Posterior vena cava (tissue), 2 donors: ENCODE measurements at regions of chr16 and their contacts with region 1.

Region 1: GRCh38 chr16:2703241-2703745 is 16.7 kb downstream of the PRSS27 start:
- DNase-seq: no peak

Region 2: GRCh38 chr16:2663553-2664546 is 39.4 kb before region 1 on chr16:
- intact Hi-C with region 1: loop called in 1 of 2 experiments (anchors 1 kb)
- DNase-seq: no peak

Region 3: DNA sequence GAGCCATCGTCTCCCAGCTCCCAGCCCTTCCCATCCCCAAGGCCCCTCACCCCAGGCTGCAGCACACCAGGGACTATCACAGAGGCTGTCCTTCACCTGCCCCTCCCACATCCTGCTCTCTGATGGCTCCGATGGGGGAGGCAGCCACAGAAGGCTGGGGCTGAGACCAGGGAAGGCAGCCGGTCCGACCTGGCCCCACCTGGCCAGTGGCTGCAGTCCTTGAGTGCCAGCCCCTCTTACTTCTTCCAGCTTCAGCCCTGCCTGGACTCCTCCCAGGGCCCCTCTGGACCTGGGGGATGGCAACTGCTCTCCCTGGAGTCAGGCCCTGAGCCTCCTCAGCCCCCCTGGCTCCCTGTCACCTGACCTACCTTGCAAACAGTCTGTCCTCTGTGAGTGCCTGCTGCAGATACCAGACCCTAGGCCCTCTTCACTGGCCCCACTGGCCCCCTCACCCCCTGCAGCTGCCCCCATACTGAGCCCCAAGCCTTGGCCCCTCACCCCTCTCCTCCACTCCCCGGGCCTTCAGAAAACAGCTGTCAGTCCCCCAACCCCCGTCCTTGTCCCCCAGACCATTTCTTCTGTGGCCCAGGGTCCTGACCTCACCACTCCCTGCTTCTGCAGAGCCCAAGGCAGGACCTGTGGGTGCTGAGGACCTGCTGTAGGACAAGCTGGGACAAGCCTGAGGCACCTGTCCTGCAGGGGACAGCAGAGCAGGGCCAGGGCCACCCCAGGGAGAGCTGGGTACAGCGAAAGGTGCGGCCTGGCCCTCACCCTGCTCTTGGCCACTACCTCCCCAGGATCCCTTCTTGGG is 36.5 kb after region 1 on chr16:
- intact Hi-C with region 1: loop called in 1 of 2 experiments (anchors 1 kb)
- DNase-seq: peak; percentile 48

Region 4: GRCh38 chr16:2784951-2785635 is 81.8 kb after region 1 on chr16:
- intact Hi-C with region 1: no loop called
- DNase-seq: peak; percentile 60

Region 5: DNA sequence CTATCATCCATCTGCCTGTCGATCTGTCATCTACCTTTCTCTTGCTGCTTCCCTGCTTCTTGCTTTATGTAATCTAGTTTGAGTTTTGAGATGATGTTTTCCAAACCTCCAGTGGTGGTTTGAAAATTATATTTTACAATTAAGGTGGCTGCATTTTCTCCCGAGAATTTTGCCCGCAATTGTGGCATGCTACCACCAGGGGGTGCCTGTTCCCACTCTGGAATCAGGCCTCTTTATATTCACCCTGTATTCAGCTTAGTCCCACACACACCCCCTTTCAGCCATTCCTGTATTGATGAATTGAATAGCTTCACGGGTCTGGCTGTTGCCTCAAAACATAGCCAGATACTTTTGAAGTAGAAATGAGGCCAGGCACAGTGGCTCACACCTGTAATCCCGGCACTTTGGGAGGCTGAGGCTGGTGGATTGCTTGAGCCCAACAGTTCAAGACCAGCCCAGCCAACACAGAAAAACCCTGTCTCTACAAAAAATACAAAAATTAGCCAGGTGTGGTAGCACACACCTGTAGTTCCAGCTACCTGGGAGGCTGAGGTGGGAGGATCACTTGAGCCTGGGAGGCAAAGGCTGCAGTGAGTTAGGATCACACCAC is 151.5 kb after region 1 on chr16:
- intact Hi-C with region 1: loop called in 1 of 2 experiments (anchors 10 kb)
- DNase-seq: peak; percentile 24